Endothelial cell of umbilical vein (primary cell): ENCODE measurements at regions of chr10 and their contacts with region 1.

Region 1: GRCh38 chr10:93463678-93464476 is 18.3 kb downstream of the MYOF start:
- DNase-seq: peak; percentile 41
- H3K4me3 ChIP-seq: no peak overlapping the region
- H3K27ac ChIP-seq: peak overlapping the region; percentile 89
- H3K4me1 ChIP-seq: peaks cover 86% of the 10 kb centered on the region
- H3K27me3 ChIP-seq: no peaks in the 10 kb centered on the region
- CTCF ChIP-seq: no peak
- POLR2A ChIP-seq: peak; percentile 32

Region 2: DNA sequence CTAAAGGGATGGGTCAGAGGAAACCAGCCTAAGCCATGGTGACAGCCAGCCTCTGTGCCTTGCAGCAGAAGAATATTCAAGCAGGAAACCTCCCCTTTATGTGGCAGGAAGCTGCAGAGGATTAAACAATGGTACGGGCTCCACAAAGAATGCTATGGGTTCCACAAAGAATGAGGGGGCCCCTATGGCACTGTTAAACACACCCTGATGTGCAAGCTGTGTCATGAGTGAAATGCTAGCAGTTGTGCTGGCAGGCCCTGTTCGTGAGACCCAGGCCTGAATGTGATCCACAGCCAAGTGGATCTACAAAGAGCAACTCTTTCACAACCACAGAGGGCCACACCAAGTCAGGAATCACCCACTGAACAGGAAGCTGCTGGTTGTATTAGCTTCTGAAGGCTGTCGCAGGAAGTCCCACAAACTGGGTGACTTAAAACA is 50.6 kb before region 1 on chr10:
- CTCF ChIA-PET with region 1: interaction called, 4 read pairs
- POLR2A ChIA-PET with region 1: no interaction called
- dilution Hi-C with region 1: no loop called
- intact Hi-C with region 1: loop called (anchors 1 kb)
- DNase-seq: peak; percentile 65
- H3K4me3 ChIP-seq: no peak overlapping the region
- H3K27ac ChIP-seq: peak overlapping the region; percentile 49
- H3K4me1 ChIP-seq: peaks cover 28% of the 10 kb centered on the region
- H3K27me3 ChIP-seq: no peaks in the 10 kb centered on the region
- CTCF ChIP-seq: no peak
- POLR2A ChIP-seq: no peak

Region 3: DNA sequence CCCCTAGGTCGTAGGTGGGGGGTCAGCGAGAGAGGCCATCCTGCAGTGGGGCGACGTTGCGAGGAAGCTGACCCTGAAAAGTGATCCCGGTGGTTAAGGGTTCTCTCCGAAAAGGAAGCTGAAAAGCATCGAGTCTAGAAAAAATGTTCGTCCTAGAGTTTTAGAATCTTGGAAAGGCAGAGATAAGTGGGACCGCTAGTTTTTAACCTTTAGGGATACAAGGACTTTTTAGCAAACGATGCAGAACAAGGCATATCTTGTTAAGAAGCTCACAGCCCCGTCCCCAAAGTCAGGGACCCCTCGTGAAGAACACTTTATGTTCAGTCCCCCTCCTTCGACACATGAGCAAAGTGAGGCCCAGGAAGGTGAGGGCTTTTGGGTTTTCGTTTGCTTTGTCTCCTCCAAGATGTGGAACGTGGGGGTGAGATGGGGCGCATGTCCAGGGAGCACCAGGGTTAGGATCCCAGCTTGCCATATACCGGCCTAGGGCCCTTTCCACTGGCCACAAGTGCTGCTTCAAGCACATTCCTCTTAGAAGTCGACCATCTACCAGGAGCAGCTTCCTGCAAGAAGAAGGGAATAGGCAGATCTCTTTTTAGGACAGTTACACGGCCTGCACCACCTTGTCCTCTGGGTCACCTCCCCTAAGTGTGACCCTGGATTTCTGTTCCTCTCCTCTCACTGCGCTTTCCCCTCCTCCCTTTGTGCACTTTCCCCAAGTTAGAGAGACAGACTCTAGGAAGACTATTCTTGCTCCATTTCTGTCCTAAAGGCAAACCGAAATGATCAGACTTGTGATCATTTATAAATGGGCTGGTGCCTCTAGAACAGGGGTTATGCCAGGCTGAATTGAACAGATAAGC is 430.9 kb after region 1 on chr10:
- CTCF ChIA-PET with region 1: no interaction called
- POLR2A ChIA-PET with region 1: no interaction called
- dilution Hi-C with region 1: no loop called
- intact Hi-C with region 1: no loop called
- DNase-seq: peak; percentile 16
- H3K4me3 ChIP-seq: peak overlapping the region; percentile 55 to 77 (median 65)
- H3K27ac ChIP-seq: no peak overlapping the region
- H3K4me1 ChIP-seq: peaks cover 7% of the 10 kb centered on the region
- H3K27me3 ChIP-seq: peaks cover 0 to 3% of the 10 kb centered on the region in 2 experiments
- CTCF ChIP-seq: no peak
- POLR2A ChIP-seq: no peak